MCF 10A (cell line): ENCODE measurements at regions of chr1 and their contacts with region 1.

Region 1: DNA sequence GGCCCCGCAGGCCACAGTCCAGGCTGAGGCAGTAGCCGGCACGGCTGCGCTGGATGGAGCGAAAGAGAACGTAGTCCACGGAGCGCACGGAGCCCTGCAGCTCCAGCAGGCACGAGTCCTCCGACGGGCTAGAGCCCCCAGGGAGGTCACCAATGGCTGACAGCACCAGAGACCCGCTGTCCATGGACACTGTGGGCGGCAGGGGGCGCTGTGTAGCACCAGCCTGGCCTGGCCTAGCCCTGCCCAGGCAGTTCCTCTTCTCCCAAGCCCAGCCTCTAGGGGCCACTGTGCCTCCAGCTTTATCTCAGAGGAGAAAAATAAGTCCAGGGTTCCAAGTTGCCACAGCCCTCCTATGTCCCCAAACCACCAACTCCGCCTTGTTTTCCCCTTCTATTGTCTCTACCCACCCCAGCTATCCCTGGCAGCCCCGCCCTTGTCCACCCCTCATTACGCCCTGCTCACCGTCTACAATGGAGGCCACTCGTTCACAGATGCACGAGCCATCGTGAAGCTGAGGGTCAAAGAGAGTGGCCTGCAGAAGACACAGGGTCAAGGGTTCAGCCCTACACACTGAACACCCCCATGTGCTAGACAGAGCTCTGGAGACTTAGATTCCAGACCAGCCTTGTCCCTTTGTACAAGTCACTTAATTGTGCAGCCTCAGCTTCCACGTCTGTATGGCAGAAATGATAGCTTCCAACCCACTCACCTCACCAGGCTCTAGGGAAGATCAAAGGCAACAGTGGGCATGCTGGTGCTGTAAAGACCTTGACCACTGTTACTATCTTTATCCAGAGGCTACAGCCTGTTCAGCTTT is 4.4 kb downstream of the ENTREP3 start:
- DNase-seq: peak; percentile 94
- H3K4me3 Mint-ChIP-seq: no peak overlapping the region
- H3K27ac Mint-ChIP-seq: no peak overlapping the region
- H3K4me1 Mint-ChIP-seq: peaks cover 19% of the 10 kb centered on the region
- H3K27me3 Mint-ChIP-seq: no peaks in the 10 kb centered on the region
- CTCF ChIP-seq: peak; percentile 100

Region 2: DNA sequence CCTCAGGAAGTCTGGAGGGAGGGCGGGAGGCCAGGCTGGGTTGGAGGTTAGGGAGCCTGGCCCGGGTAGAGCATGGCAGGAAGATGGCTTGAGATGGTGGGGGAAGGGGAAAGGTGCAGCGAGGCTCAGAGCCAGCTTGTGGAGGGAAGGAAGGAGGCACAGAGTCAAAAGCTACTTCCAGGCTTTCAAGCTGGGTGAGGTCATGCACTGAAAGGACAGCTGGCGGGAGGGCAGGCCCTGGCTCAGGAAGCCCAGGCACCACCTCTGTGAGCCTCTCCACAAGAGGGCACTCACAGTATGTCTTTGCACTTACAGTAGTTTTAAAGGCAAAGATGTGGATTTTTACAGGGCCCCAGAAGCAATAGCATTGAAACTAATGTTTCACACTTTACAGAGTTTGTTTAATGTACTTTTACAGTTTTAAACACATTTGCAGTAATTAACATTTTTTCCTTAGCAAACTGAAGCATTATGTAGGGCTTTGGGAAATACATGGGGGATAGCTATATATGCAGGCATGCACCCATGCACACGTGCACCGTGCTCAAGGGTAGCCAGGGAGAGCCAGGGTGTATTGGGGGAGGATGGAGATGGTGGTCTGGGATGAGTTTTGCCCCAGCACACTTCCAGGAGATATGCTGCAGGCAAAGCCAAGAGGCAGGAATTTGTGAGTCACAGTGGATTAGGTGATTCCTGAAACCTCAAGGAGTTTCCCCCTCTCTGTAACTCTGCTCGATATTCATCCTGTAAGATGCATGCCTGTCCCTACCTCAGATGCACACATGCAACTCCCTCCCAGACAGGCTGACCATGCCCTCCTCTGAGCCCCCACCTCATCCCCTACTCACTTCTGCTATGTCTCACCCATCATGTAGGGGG is 205.8 kb before region 1 on chr1:
- CTCF ChIA-PET with region 1: no interaction called
- POLR2A ChIA-PET with region 1: no interaction called
- intact Hi-C with region 1: no loop called
- DNase-seq: peak; percentile 90
- H3K4me3 Mint-ChIP-seq: no peak overlapping the region
- H3K27ac Mint-ChIP-seq: no peak overlapping the region
- H3K4me1 Mint-ChIP-seq: peaks cover 37% of the 10 kb centered on the region
- H3K27me3 Mint-ChIP-seq: no peaks in the 10 kb centered on the region
- CTCF ChIP-seq: peak; percentile 83

Region 3: DNA sequence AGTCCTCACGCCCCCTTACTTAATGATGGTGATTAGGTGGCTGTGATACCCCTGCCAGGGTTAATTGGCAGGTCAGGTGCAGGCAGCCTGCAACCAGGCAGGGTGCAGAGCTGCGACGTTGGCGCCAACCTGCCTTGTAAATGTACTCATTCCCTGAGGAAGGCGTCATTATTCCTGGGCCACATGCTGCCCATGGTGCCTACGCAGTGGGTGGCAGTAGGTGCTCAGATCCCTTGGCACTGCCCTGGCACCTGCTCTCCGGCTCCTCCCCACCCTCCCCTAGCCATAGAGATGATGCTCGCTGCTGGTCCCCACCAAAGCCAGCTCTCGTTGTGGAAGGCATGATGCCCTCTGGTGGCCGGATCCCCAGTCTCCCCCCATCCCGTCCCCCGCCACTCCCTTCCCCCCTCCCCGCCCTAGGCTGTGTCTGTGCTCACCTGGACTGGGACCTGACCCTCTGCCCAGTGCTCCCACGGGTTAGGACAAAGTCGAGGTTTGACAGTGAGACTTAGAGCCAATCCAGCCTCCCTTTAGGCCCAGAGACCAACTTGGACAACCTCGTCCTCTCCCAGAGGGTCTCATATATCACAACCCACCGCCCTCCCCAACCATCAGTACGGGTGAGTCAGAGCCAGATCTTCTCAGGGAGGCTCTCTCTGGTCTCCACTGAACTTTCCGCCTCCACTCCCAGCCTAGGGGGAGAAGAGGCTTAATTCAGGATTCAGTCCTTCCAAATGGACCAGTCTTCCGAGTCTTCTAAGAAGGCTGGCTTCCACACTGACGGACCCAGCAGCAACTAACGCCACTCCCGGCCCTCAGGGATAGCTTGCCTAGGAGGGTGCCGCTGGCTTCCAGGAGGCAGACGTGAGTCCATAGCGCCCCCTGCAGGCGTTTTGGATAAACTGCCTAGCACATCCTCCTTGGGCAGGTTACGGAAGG is 83.4 kb before region 1 on chr1:
- CTCF ChIA-PET with region 1: interaction called, 10 read pairs
- POLR2A ChIA-PET with region 1: no interaction called
- intact Hi-C with region 1: no loop called
- DNase-seq: peak; percentile 96
- H3K4me3 Mint-ChIP-seq: peak overlapping the region; percentile 30
- H3K27ac Mint-ChIP-seq: no peak overlapping the region
- H3K4me1 Mint-ChIP-seq: peaks cover 21% of the 10 kb centered on the region
- H3K27me3 Mint-ChIP-seq: no peaks in the 10 kb centered on the region
- CTCF ChIP-seq: peak; percentile 98

Region 4: GRCh38 chr1:155261852-155262673 is 11.2 kb after region 1 on chr1 and contains the start of gene SCAMP3:
- CTCF ChIA-PET with region 1: interaction called, 238 read pairs
- POLR2A ChIA-PET with region 1: interaction called, 45 read pairs
- intact Hi-C with region 1: no loop called
- DNase-seq: peak; percentile 100
- H3K4me3 Mint-ChIP-seq: peak within 1 kb of the TSS; percentile 98
- H3K27ac Mint-ChIP-seq: peak within 1 kb of the TSS; percentile 96
- H3K4me1 Mint-ChIP-seq: peaks cover 18% of the 10 kb centered on the region
- H3K27me3 Mint-ChIP-seq: no peaks in the 10 kb centered on the region
- CTCF ChIP-seq: no peak
- total RNA-seq, gene SCAMP3: 80.6 and 88.1 TPM in 2 replicates

Region 5: GRCh38 chr1:155308493-155309422 is 57.9 kb after region 1 on chr1 and contains the start of gene FDPS:
- CTCF ChIA-PET with region 1: interaction called, 44 read pairs
- POLR2A ChIA-PET with region 1: interaction called, 3 read pairs
- intact Hi-C with region 1: loop called (anchors 1 kb)
- DNase-seq: peak; percentile 100
- H3K4me3 Mint-ChIP-seq: peak within 1 kb of the TSS; percentile 100
- H3K27ac Mint-ChIP-seq: peak within 1 kb of the TSS; percentile 97
- H3K4me1 Mint-ChIP-seq: peaks cover 13% of the 10 kb centered on the region
- H3K27me3 Mint-ChIP-seq: no peaks in the 10 kb centered on the region
- CTCF ChIP-seq: no peak
- total RNA-seq, gene FDPS: 176 and 264 TPM in 2 replicates

Region 6: DNA sequence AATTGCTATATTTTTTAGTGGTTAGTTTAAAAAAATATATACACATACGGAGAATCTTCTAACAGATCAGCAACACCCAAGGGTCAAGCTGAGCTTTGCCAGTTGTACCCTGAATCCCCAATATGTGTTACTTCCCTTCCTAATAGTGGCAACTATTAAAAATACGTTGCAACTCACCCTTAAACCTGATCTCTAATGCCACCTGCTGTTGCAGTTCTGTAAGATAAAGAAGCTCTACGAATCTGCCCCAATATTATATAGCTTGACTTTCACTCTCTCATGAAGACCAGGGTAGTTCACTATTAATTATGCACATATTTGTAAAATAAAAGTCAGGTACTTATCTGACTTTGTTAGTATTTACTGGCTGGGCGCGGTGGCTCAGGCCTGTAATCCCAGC is 253.4 kb after region 1 on chr1:
- CTCF ChIA-PET with region 1: interaction called, 7 read pairs
- POLR2A ChIA-PET with region 1: interaction called, 3 read pairs
- intact Hi-C with region 1: loop called (anchors 1 kb)
- DNase-seq: peak; percentile 63
- H3K4me3 Mint-ChIP-seq: no peak overlapping the region
- H3K27ac Mint-ChIP-seq: no peak overlapping the region
- H3K4me1 Mint-ChIP-seq: peaks cover 33% of the 10 kb centered on the region
- H3K27me3 Mint-ChIP-seq: no peaks in the 10 kb centered on the region
- CTCF ChIP-seq: peak; percentile 61

Region 7: GRCh38 chr1:155648551-155649147 is 397.8 kb after region 1 on chr1:
- CTCF ChIA-PET with region 1: interaction called, 27 read pairs
- POLR2A ChIA-PET with region 1: interaction called, 5 read pairs
- intact Hi-C with region 1: no loop called
- DNase-seq: peak; percentile 97
- H3K4me3 Mint-ChIP-seq: peak overlapping the region; percentile 73
- H3K27ac Mint-ChIP-seq: peak overlapping the region; percentile 47
- H3K4me1 Mint-ChIP-seq: peaks cover 53% of the 10 kb centered on the region
- H3K27me3 Mint-ChIP-seq: no peaks in the 10 kb centered on the region
- CTCF ChIP-seq: peak; percentile 61